ENCODE measurements at regions of chr22 and their contacts with region 1.

Region 1: DNA sequence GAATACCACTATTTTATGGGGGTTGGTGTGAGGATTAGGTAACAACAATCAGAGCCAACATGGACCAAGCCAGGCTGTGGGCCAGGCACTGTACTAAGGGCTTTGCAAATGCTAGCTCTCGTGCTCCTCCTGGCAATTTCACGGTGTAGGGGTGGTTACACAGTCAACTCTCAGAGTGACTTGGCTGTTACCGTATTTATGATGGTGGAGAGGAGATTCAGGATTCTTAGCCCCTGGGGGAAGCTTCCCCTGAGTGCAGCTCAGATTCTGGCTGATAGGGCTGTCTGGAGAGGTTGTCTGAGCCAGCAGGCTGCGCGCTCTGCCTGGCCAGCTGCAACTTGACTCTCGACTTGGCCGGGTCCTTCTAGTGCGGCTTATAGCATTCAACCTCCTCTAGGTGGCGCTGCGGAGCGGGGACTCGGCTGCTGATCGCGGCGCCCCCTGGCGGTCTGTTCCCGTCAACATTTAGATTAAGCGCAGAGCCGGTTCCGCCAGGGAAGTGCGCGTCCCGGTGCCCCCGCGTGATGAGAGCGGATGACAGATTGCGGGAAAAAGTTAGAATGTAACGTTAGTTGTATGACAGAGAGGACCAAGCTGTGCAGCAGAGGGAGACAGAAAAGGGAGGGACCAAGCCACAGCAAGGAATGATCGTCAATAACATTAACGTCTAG is 4.5 kb upstream of the NCF4 start:
- DNase-seq: peak; percentile 96
- H3K4me3 Mint-ChIP-seq: no peak overlapping the region
- H3K27ac Mint-ChIP-seq: no peak overlapping the region
- H3K4me1 Mint-ChIP-seq: peaks cover 16% of the 10 kb centered on the region
- H3K27me3 Mint-ChIP-seq: peaks cover 2% of the 10 kb centered on the region

Region 2: DNA sequence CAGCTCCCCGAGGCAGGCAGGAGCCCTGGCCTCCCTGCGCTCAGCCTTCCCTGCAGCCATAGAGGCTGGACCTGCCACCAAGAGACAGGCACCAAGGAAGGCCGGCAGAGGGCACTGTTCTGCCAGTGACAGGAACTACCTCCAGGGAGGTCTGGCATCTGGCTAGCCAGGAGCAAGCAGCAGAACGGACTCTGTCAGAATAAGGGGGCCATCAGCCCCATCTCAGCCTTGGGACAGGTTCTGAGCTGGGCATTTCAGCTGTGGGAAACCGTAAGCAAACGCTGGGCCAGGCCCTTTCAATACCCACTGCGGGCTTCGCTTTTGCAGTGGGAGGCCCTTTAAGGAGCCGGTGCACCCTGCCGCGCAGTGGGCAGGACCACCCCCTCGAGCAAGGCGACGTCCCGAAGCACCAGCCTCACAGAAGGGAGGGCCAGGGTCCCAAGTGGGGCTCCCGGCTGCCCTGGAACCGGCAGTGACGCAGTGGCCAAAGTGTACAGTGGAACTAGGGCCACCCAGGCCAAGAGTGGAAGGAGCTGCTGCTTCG is 98.5 kb before region 1 on chr22:
- CTCF ChIA-PET with region 1: interaction called, 18 read pairs
- intact Hi-C with region 1: loop called (anchors 1 kb)
- DNase-seq: peak; percentile 90
- H3K4me3 Mint-ChIP-seq: no peak overlapping the region
- H3K27ac Mint-ChIP-seq: no peak overlapping the region
- H3K4me1 Mint-ChIP-seq: peaks cover 3% of the 10 kb centered on the region
- H3K27me3 Mint-ChIP-seq: peaks cover 5% of the 10 kb centered on the region

Region 3: DNA sequence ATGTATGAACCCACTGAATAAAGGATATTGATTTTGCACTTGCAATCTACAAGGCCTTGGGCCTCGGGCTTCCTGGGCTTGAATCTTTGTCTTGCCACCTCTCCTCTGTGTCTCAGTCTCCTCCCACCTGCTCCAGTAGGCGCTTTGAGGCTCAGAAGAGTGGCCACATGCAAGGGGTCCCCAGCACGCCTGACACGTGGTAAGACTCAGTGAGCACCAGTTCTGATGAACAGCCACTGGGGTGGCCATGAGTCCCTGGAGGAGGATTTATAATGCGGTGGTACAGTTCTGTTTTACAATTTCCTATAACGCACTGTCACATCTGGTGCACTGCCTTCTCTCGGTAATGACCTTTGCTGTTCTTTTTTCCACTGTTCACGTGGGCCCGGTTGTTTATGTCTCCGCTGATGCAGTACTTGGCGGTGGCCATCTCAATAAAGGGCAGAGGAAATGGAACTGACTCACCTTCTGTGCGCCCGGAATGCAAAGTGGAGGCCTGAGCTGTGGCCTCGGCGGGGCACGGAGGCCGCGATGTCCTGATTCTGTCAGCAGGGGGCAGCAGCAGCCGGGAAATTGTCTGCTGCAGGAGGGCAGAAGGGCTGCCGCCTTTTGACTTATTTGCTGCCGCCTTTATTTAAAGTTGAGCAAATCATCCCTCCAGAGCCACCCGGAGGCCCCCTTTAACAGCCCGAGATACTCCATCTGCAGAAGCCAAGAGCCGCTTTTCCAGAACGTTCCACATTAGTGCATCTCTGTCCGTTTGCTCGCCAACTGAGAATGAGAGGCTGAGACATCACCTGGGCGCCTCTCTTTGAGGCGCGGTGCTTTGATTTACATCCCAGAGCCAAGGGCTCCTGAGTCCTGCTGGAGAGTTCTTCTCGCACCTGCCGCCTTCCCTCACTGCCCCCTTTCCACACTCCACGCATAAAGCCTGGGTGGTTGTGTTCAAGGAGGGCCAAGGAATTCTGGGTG is 74.3 kb before region 1 on chr22:
- CTCF ChIA-PET with region 1: interaction called, 43 read pairs
- intact Hi-C with region 1: loop called (anchors 1 kb)
- DNase-seq: peak; percentile 94
- H3K4me3 Mint-ChIP-seq: peak overlapping the region; percentile 28
- H3K27ac Mint-ChIP-seq: peak overlapping the region; percentile 72
- H3K4me1 Mint-ChIP-seq: peaks cover 26% of the 10 kb centered on the region
- H3K27me3 Mint-ChIP-seq: peaks cover 3% of the 10 kb centered on the region

Region 4: GRCh38 chr22:36873680-36874537 is 17.7 kb after region 1 on chr22:
- CTCF ChIA-PET with region 1: interaction called, 12 read pairs
- intact Hi-C with region 1: no loop called
- DNase-seq: peak; percentile 38
- H3K4me3 Mint-ChIP-seq: no peak overlapping the region
- H3K27ac Mint-ChIP-seq: no peak overlapping the region
- H3K4me1 Mint-ChIP-seq: peaks cover 11% of the 10 kb centered on the region
- H3K27me3 Mint-ChIP-seq: no peaks in the 10 kb centered on the region

Region 5: DNA sequence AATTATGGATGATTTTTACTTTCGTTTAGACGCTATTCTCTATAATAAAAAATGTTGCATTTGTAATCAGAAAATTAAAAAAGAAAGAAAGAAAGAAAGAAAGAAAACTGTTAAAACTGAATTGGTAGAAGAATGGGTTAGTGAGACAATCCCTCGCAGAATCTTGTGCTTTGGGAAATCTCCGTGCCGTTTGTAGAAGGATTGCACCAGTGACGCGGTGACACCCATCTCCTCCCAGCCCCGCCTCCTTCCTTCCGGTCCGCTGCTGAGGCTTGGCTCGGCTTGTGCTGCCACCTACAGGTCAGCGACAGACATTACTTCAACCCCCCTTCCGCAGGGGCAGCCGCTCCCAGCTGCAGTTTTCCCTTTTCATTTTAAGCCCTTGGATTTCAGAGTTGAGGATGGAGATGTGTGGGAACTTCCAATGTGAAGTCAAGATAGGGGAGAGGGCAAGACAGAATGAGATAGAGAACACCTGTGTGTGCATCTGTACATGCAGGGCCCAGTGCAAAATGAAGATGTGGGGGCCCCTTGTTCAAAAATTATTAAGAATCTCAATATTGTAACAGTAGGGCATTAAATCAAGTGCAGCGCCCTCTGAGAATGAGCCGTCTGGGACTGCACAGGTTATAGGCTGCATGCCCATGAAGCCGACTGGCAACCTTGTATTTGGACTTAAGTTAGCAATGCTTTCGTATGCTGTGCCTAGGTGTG is 121.8 kb after region 1 on chr22:
- CTCF ChIA-PET with region 1: interaction called, 21 read pairs
- intact Hi-C with region 1: loop called (anchors 1 kb)
- DNase-seq: peak; percentile 95
- H3K4me3 Mint-ChIP-seq: peak overlapping the region; percentile 80
- H3K27ac Mint-ChIP-seq: peak overlapping the region; percentile 59
- H3K4me1 Mint-ChIP-seq: peaks cover 10% of the 10 kb centered on the region
- H3K27me3 Mint-ChIP-seq: peaks cover 2% of the 10 kb centered on the region